CD4-positive, alpha-beta T cell (primary cell): ENCODE measurements at regions of chr11 and their contacts with region 1.

Region 1: DNA sequence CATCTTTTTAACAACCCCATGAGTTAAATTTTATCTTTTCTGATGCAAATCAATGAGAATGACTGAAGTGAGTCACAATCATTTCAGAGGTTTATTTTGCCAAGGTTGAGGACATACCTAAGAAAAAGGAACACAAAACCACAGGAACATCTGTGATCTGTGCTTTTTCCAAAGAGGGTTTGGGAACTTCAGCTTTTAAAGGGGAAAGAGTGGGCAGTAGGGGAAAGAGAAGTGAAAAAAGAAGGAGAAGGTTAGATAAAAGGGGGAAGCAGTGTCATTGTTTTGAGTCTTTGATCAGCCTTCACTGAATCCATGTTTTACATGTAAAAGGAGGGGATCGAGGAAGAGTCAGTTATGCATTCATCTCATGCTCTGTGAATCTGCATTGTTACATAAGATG is 45.3 kb upstream of the SPON1 start:
- DNase-seq: no peak
- ATAC-seq: no peak
- H3K4me3 ChIP-seq: no peak overlapping the region
- H3K4me3 Mint-ChIP-seq: no peak overlapping the region
- H3K27ac ChIP-seq: no peak overlapping the region
- H3K27ac Mint-ChIP-seq: no peak overlapping the region
- H3K4me1 ChIP-seq: peaks cover 5% of the 10 kb centered on the region
- H3K4me1 Mint-ChIP-seq: peaks cover 32% of the 10 kb centered on the region
- H3K27me3 ChIP-seq: no peaks in the 10 kb centered on the region
- H3K27me3 Mint-ChIP-seq: no peaks in the 10 kb centered on the region
- CTCF ChIP-seq: no peak

Region 2: DNA sequence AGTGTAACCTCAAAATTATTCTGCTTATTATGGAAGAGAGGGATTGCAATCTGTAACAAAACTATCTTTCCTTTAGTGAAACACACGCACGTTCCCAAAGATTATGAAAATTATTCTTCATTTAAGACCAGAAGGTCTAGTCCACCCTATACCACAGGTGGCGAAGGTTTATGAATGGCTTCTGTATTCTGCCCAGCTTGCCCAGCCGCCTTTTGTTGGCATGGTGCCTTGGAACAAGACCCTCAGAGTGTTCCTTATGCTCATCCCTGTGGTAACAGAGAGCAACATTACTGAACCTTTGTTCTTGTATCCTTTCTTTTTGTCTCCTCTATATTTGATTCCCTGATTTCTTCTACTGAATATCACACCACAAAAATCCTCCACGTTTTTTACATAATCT is 132.4 kb before region 1 on chr11:
- CTCF ChIA-PET with region 1: no interaction called
- POLR2A ChIA-PET with region 1: no interaction called
- intact Hi-C with region 1: no loop called
- DNase-seq: no peak
- ATAC-seq: no peak
- H3K4me3 ChIP-seq: no peak overlapping the region
- H3K4me3 Mint-ChIP-seq: no peak overlapping the region
- H3K27ac ChIP-seq: no peak overlapping the region
- H3K27ac Mint-ChIP-seq: no peak overlapping the region
- H3K4me1 ChIP-seq: no peaks in the 10 kb centered on the region
- H3K4me1 Mint-ChIP-seq: no peaks in the 10 kb centered on the region
- H3K27me3 ChIP-seq: no peaks in the 10 kb centered on the region
- H3K27me3 Mint-ChIP-seq: no peaks in the 10 kb centered on the region
- CTCF ChIP-seq: no peak

Region 3: DNA sequence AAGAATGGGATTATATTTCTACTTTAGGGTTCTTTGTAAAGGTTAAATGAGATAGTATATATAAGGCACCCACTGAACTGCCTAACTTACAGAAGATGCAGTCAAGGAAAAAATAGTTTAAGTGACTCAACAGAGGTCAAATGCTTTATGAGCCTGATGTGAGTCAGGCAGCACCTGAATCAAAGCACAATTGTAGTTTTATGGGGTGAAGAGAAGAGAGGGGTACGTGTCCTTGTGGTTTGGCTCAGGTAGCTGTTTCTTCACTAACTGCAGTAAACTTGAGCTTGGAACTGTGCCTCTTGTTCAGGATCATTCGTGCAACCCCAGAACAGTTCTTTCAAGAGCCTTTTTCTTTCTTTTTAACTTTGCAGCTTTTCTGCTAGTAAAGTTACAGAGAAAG is 80.0 kb before region 1 on chr11:
- CTCF ChIA-PET with region 1: no interaction called
- POLR2A ChIA-PET with region 1: no interaction called
- intact Hi-C with region 1: no loop called
- DNase-seq: no peak
- ATAC-seq: no peak
- H3K4me3 ChIP-seq: no peak overlapping the region
- H3K4me3 Mint-ChIP-seq: no peak overlapping the region
- H3K27ac ChIP-seq: no peak overlapping the region
- H3K27ac Mint-ChIP-seq: no peak overlapping the region
- H3K4me1 ChIP-seq: no peaks in the 10 kb centered on the region
- H3K4me1 Mint-ChIP-seq: no peaks in the 10 kb centered on the region
- H3K27me3 ChIP-seq: no peaks in the 10 kb centered on the region
- H3K27me3 Mint-ChIP-seq: no peaks in the 10 kb centered on the region
- CTCF ChIP-seq: no peak

Region 4: DNA sequence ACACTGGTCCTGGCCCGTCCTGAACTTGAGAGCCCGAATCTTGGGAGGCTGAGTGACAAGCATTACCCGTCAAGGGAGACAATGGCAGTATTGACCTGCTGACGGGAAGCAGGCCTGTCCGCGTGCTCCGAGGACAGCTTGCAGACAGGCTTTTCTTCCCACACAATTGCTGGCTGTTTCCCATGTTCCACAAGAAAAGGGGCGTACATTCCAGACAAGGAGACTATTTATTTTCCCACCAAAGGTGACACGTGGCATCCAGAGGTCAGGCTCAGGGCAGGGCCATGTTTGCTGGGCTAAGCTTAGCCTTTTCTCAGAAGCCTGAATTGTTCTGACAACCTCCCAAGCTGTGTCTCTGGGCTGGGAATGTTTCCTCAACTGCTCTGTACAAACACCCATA is 41.6 kb before region 1 on chr11:
- CTCF ChIA-PET with region 1: no interaction called
- POLR2A ChIA-PET with region 1: interaction called, 3 read pairs
- intact Hi-C with region 1: loop called in 1 of 2 experiments (anchors 5 kb)
- DNase-seq: no peak
- ATAC-seq: no peak
- H3K4me3 ChIP-seq: no peak overlapping the region
- H3K4me3 Mint-ChIP-seq: no peak overlapping the region
- H3K27ac ChIP-seq: no peak overlapping the region
- H3K27ac Mint-ChIP-seq: no peak overlapping the region
- H3K4me1 ChIP-seq: no peaks in the 10 kb centered on the region
- H3K4me1 Mint-ChIP-seq: peaks cover 29% of the 10 kb centered on the region
- H3K27me3 ChIP-seq: no peaks in the 10 kb centered on the region
- H3K27me3 Mint-ChIP-seq: no peaks in the 10 kb centered on the region
- CTCF ChIP-seq: no peak